IMR-90 (cell line): ENCODE measurements at regions of chr14 and their contacts with region 1.

Region 1: GRCh38 chr14:104639889-104640548 is 35.4 kb upstream of the TMEM179 start:
- DNase-seq: peak; percentile 24
- ATAC-seq: peak; percentile 97
- H3K4me3 ChIP-seq: no peak overlapping the region
- H3K27ac ChIP-seq: no peak overlapping the region
- H3K4me1 ChIP-seq: no peaks in the 10 kb centered on the region
- H3K27me3 ChIP-seq: peaks cover 22% of the 10 kb centered on the region
- CTCF ChIP-seq: peak; percentile 92
- POLR2A ChIP-seq: no peak
- RAD21 ChIP-seq: peak; percentile 89

Region 2: DNA sequence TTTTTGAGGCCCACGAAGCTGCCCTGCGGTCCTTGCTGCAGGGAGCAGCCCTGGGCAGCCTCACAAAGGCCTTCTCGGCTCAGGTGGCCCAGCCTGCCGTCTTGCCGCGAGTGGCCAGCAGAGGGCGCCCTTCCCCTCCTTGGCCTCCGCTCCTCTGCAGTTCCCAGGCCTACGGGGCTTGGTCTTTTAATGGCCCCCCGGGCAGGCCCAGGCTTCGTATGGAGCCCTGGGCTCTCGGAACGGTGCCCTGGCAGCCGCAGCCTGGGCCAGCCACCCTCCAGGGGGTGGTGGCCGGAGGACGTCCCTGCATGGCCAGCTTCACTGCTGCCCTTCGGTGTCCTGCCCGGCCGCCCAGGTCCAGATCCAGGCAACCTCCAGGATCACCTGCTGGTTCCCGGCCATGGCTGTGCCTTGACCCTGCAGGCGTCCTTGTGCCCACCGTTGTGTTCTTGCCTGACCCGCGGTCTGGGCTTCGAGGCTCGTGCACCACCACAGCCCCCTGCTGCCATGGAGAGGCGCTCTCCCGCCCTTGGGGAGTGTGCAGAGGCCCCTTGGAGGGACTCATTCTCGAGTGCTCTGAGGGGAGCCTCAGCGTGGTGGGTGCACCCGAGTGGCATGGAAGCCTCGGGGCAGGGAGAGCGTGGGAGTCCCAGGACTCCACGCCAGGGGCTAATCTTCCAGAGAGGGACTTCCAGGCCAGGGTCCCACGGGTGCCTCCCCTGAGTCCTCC is 545.1 kb before region 1 on chr14:
- CTCF ChIA-PET with region 1: no interaction called
- POLR2A ChIA-PET with region 1: no interaction called
- dilution Hi-C with region 1: no loop called
- in situ Hi-C with region 1: loop called (anchors 25 kb)
- intact Hi-C with region 1: loop called (anchors 1 kb)
- DNase-seq: no peak
- ATAC-seq: peak; percentile 83
- H3K4me3 ChIP-seq: no peak overlapping the region
- H3K27ac ChIP-seq: no peak overlapping the region
- H3K4me1 ChIP-seq: no peaks in the 10 kb centered on the region
- H3K27me3 ChIP-seq: no peaks in the 10 kb centered on the region; the same call in 1 of the 2 replicates
- CTCF ChIP-seq: peak; percentile 63
- POLR2A ChIP-seq: no peak
- RAD21 ChIP-seq: peak; percentile 50

Region 3: GRCh38 chr14:104137297-104138097 is 502.5 kb before region 1 on chr14:
- CTCF ChIA-PET with region 1: interaction called, 3 read pairs
- POLR2A ChIA-PET with region 1: no interaction called
- dilution Hi-C with region 1: no loop called
- in situ Hi-C with region 1: loop called (anchors 10 kb)
- intact Hi-C with region 1: no loop called
- DNase-seq: peak; percentile 4
- ATAC-seq: peak; percentile 90
- H3K4me3 ChIP-seq: no peak overlapping the region
- H3K27ac ChIP-seq: no peak overlapping the region
- H3K4me1 ChIP-seq: no peaks in the 10 kb centered on the region; the same call in 1 of the 2 replicates
- H3K27me3 ChIP-seq: peaks cover 45% of the 10 kb centered on the region
- CTCF ChIP-seq: peak; percentile 55
- POLR2A ChIP-seq: no peak
- RAD21 ChIP-seq: peak; percentile 60

Region 4: DNA sequence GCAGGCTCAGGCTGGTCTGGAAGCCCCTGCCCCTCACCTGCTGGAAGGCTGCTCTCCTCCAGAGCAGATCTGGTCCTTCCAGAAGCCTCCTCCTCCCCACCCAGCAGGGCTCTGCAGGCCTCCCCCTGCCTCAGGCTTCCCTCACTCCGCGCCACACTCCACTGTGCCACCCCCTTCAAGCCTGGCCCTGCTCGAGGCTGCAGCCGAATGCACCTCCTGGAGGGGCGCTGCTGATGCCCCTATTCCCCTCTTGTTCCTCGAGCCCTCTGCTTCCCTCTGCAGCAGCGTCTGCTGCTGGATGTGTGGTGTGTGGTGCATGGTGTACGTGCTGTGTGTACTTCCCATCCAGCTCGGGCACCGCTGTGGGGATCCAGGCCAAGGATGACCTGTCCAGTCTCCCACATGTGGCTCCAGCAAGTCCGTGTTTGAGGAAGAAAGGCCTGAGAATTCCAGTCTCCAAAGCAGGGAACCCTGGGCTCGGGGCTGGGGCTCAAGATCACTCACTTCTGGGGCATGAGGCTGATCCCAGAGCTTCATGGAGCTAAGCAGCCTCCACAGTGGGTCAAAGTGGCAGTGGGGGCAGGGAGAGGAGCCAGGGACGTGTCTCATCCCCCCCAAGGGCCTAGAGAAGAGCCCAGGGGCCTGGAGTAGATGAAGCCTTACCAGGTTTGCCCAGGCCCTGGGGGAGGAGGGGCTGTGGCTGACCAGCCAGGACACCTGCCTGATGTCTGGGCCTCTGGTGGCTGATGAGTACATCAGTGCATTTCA is 196.4 kb before region 1 on chr14:
- CTCF ChIA-PET with region 1: no interaction called
- POLR2A ChIA-PET with region 1: no interaction called
- dilution Hi-C with region 1: no loop called
- in situ Hi-C with region 1: no loop called
- intact Hi-C with region 1: no loop called
- DNase-seq: no peak
- ATAC-seq: no peak
- H3K4me3 ChIP-seq: no peak overlapping the region
- H3K27ac ChIP-seq: no peak overlapping the region
- H3K4me1 ChIP-seq: no peaks in the 10 kb centered on the region
- H3K27me3 ChIP-seq: no peaks in the 10 kb centered on the region
- CTCF ChIP-seq: no peak
- POLR2A ChIP-seq: no peak
- RAD21 ChIP-seq: no peak

Region 5: GRCh38 chr14:104800015-104800770 is 160.2 kb after region 1 on chr14:
- CTCF ChIA-PET with region 1: no interaction called
- POLR2A ChIA-PET with region 1: no interaction called
- dilution Hi-C with region 1: no loop called
- in situ Hi-C with region 1: no loop called
- intact Hi-C with region 1: no loop called
- DNase-seq: peak; percentile 67
- ATAC-seq: peak; percentile 75
- H3K4me3 ChIP-seq: peak overlapping the region; percentile 61
- H3K27ac ChIP-seq: peak overlapping the region; percentile 23
- H3K4me1 ChIP-seq: peaks cover 22% of the 10 kb centered on the region
- H3K27me3 ChIP-seq: no peaks in the 10 kb centered on the region
- CTCF ChIP-seq: peak; percentile 41
- POLR2A ChIP-seq: no peak
- RAD21 ChIP-seq: no peak